ENCODE measurements at regions of chr6 and their contacts with region 1.

Region 1: DNA sequence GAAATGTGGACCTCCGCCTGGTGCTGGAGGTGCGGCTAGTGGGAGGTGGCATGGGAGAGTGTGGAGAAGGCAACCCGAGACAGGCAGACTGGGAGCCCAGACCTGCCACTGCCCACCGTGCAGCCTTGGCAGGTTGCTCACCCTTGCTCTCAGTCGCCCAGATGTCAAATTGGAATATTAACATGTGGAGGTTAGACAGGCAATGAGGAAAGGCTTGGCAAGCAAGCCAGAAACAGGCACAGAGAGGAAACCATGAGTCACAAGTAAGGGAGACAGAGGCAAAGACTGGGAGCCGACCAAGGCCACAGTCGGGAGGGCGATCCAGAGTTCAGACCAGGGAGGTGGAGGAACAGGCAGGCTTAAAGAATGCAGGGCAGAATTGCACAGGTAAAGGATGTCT is 178.2 kb downstream of the FOXC1 start:
- DNase-seq: peak; percentile 53
- H3K4me3 ChIP-seq: no peak overlapping the region
- CTCF ChIP-seq: no peak

Region 2: DNA sequence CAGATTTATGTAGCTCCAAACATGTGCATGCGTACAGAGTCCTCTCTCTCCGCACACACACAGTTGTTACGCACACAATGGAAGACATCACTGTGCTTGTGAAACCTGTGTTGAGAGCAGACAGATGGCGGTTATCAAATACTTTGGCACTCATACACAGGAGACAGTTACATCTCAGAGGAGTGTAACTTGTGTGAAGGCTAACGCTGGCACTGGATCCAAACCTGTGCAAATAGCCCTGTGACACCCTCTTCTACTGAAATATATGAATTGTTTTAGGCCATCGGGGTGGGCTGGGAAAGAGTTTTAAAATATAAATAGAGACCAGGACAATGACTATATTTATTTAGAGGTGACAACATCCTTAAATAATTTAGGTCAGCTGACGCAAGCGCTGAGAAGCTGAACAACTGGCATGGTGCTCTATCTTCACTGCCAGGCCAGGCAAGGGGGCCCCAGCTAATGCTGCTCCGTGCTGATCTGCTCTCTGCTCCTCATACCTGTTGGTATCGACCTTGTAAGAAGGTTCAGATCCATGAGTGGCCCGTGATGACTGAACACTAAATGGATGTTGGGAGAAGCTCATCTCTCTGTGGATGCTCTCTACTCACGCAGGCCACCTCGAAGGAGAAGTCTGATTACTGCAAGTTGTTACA is 108.7 kb before region 1 on chr6:
- in situ Hi-C with region 1: no loop called
- DNase-seq: no peak
- H3K4me3 ChIP-seq: no peak overlapping the region
- CTCF ChIP-seq: no peak

Region 3: DNA sequence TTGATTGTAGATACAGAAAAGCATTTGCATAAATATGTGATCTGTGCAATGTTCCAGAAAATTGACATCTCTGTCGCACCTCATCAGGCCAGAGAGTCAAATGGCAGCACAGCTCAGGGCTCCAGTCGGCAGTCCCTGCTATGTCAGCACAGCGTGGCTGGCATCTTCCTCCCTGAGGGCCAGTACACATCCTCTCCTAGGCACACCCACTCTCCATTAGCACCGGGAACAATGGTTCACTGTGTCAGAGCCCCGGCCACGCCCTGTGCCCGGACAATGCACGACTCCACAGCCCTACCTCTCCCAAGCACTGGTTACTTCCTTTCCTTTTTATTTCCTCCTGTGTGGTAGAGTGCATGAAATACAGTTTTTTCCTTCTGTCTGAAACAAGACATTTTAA is 63.3 kb before region 1 on chr6:
- in situ Hi-C with region 1: loop called (anchors 5 kb)
- DNase-seq: no peak
- H3K4me3 ChIP-seq: no peak overlapping the region
- CTCF ChIP-seq: no peak

Region 4: DNA sequence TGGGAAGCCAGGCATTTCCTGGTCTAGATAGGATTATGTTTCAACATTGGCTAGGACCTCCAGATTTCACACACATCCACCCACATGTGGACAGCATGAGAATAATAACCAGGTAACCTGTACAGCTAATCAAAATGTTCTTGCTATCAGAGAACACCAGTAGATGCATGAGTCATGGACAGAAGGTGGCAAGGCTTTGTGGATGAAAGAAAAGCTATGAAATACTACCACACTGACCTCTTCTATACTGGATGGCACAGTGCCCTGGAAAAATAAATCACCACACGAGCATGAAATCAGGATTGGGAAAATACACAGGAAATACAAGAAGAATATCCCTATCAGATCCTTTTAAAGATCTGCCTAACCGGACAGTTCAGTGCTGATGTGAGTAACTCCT is 344.5 kb after region 1 on chr6:
- in situ Hi-C with region 1: no loop called
- DNase-seq: no peak
- H3K4me3 ChIP-seq: no peak overlapping the region
- CTCF ChIP-seq: no peak

Region 5: DNA sequence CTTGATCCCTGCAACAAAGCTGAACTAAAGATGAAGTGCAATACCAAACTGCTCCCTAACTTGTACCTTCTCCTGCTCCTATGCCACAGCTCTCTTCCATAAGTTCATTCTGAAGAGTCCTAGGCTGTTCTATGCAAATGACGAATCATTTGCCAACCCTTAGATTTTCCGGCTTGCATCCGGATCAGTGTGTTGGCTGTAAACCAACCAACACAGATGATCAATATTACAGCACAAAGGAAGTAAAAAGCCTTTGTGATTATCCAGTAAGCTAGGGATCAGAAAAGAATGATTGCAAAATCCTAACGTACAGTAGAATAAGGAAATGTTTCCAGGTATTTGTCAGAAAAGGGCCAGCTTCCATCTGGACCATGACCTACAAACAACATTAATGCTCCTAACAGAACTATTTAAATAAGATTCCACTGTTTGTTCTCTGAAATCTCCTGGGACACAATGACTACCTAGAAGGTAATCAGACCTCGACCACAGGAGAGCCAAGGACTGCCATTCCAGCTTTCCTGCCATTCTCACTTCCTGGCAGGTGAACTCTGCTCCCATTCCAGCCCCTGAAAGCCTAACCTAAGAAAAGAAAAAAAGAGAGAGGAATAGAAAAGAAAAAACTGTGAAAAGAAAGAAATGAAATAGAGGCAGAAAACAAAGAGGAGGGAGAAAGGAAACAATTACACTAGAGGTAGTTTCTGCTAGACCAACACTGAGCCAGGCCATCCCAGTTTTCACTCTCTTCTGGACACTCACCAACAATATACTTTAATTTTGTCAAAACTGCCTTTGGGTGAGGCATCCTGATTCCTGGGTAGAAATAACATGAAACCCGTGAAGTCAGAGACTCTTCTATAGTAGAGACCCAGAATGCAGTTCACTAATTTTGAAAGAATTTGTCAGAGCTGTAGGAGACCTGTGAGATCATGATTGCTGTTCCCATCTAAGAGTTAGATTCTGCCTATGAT is 437.8 kb after region 1 on chr6:
- in situ Hi-C with region 1: no loop called
- DNase-seq: peak; percentile 16
- H3K4me3 ChIP-seq: no peak overlapping the region
- CTCF ChIP-seq: no peak